MCF 10A (cell line): ENCODE measurements at regions of chr19 and their contacts with region 1.

Region 1: DNA sequence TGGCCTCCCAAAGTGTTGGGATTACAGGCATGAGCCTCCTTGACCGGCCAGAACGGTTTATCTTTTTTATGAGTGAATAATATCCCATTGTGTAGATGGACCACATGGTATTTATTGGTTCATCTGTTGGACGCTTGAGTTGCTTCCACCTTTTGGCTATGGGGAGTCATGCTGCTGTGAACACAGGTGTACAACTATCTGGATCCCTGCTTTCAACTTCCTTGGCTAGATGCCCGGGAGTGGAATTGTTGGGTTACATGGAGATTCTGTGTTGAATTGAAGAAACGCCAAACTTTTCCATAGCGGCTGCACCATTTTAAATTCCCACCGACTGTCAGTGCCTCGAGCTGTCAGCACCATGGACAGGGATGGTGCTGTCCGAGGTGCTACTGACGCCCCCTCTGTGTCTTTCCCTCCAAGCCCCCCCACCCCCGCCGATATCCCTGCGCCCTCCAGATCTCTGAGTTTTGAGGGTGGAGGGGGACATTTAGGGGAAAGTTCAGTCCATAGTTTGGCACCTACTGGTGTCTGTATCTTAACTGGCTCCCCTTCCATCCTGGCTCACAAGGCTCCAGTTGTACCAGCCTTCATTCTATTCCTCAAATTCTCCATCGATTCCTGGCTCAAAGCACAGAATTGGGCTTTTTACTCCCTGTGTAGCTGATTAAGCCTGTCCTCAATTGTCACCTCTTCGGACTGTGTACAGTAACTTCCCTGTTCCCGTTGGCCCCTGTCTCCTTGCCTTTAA is 27.3 kb downstream of the PNPLA6 start:
- DNase-seq: peak; percentile 54
- H3K4me3 Mint-ChIP-seq: no peak overlapping the region
- H3K27ac Mint-ChIP-seq: no peak overlapping the region
- H3K4me1 Mint-ChIP-seq: no peaks in the 10 kb centered on the region
- H3K27me3 Mint-ChIP-seq: no peaks in the 10 kb centered on the region
- CTCF ChIP-seq: no peak

Region 2: DNA sequence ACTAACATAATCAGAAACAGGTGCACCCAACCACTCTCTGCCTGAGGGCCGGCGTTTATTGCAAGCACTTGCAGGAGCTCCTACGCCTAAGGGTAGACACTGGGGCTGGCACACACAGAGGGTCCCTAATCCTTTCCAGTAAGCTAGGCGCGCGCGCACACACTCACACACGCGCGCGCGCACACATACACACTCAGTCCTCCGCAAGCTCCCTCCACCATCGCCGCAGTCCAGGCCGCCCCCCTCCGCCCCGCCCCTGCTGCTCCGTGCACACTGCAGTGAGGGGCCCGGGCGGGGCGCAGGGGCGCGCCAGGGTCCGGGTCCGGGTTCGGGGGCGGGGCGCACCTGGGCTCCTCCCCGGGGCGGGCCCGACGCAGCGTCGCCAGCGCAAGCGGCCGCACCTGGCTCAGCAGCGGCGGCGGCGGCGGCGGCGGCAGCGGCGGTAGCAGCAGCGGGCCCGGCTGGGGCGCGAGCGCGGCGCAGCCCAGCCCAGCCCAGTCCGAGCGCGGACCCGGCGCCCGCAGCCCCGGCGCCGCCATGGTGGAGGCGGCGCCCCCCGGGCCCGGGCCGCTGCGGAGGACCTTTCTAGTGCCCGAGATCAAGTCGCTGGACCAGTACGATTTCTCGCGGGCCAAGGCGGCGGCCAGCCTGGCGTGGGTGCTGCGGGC is 32.8 kb after region 1 on chr19 and contains the start of gene CAMSAP3:
- CTCF ChIA-PET with region 1: interaction called, 35 read pairs
- POLR2A ChIA-PET with region 1: interaction called, 18 read pairs
- intact Hi-C with region 1: no loop called
- DNase-seq: peak; percentile 36
- H3K4me3 Mint-ChIP-seq: peak within 1 kb of the TSS; percentile 71
- H3K27ac Mint-ChIP-seq: no peak within 1 kb of the TSS
- H3K4me1 Mint-ChIP-seq: peaks cover 5% of the 10 kb centered on the region
- H3K27me3 Mint-ChIP-seq: no peaks in the 10 kb centered on the region
- CTCF ChIP-seq: no peak
- total RNA-seq, gene CAMSAP3: 6.7 and 9.1 TPM in 2 replicates

Region 3: GRCh38 chr19:7629347-7630054 is 66.7 kb after region 1 on chr19 and contains the starts of genes PET100 and XAB2:
- CTCF ChIA-PET with region 1: interaction called, 10 read pairs
- POLR2A ChIA-PET with region 1: interaction called, 10 read pairs
- intact Hi-C with region 1: no loop called
- DNase-seq: peak; percentile 99
- H3K4me3 Mint-ChIP-seq: peak within 1 kb of the TSS; percentile 95
- H3K27ac Mint-ChIP-seq: peak within 1 kb of the TSS; percentile 100
- H3K4me1 Mint-ChIP-seq: peaks cover 23% of the 10 kb centered on the region
- H3K27me3 Mint-ChIP-seq: no peaks in the 10 kb centered on the region
- CTCF ChIP-seq: no peak
- total RNA-seq, gene PET100: 53.9 and 101 TPM in 2 replicates
- total RNA-seq, gene XAB2: 28.7 and 29.4 TPM in 2 replicates

Region 4: GRCh38 chr19:7680606-7681339 is 118.0 kb after region 1 on chr19 and contains the start of gene TRAPPC5:
- CTCF ChIA-PET with region 1: interaction called, 26 read pairs
- POLR2A ChIA-PET with region 1: interaction called, 19 read pairs
- intact Hi-C with region 1: loop called (anchors 1 kb)
- DNase-seq: peak; percentile 74
- H3K4me3 Mint-ChIP-seq: peak within 1 kb of the TSS; percentile 84
- H3K27ac Mint-ChIP-seq: peak within 1 kb of the TSS; percentile 66
- H3K4me1 Mint-ChIP-seq: peaks cover 14% of the 10 kb centered on the region
- H3K27me3 Mint-ChIP-seq: no peaks in the 10 kb centered on the region
- CTCF ChIP-seq: peak; percentile 96
- total RNA-seq, gene TRAPPC5: 123 and 155 TPM in 2 replicates